Activated B cell treated with CpG ODN at 0.5 μM for 24 hours (primary cell): ENCODE measurements at regions of chr19 and their contacts with region 1.

Region 1: DNA sequence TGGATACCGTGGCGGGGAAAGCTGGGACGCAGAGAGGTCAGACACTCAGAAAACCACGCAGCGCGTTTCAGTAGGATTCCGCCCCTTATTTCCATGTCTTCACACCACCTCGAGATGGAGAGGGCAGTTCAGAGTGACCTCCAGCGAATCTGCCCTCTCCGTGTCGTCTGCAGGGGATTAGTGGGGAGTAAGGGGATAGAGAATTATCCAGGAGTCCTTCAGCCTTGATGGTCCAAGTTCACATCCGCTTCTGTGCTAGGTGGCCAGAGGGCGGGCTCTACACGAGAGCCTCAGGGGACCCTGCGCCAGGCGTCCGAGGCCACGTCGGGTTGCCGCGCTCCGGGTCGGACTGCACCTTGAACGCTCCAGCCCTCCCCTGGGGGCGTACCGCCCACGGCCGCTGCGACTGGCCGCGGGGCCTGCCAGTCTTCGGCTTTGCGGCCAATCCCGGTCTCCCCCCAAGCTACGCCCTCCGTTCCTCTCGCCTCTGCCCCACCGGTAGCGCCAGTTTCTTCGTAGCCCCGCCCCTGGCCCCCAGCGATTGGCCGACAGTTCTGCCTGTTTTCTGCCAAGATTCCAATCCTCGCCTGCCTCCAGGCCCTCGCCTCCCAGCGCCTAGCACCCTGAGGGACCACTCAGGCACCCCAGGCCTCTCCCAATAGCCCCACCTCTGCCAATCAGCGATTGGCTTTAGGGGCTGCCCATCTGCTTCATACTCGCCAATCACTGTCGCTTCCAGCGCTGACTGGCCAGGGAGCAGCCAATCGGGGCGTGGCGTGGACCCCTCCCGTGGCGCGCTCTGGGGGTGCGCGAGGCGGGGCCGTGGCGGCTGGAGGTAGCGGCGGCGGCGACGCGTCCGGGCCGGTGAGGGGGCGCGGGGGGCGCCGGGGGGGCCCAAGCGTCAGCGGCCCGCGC is at the start of gene SLC25A42:
- DNase-seq: peak; percentile 96
- ATAC-seq: peak; percentile 89
- H3K4me3 Mint-ChIP-seq: peak within 1 kb of the TSS; percentile 88
- H3K27ac Mint-ChIP-seq: peak within 1 kb of the TSS; percentile 89
- H3K4me1 Mint-ChIP-seq: peaks cover 52% of the 10 kb centered on the region
- H3K27me3 Mint-ChIP-seq: no peaks in the 10 kb centered on the region
- CTCF ChIP-seq: no peak
- total RNA-seq, gene SLC25A42: 14.2 and 17.5 TPM in 2 replicates

Region 2: DNA sequence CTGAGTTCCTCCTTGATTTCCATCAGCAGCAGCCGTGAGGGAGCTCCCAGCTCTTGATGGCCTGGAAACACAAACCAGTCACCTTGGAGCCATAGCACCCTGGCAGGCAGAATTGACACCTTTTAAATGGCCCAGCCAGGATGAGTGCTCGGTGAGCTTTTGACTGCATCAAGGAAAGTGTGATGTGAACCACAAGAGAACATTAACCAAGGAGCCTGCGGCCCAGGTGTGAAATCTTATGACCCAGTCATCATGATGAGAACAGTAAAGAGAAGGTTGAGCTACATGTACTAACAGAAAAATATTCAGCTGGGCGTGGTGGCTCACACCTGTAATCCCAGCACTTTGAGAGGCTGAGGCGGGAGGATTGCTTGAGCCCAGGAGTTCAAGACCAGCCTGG is 52.9 kb before region 1 on chr19:
- CTCF ChIA-PET with region 1: no interaction called
- POLR2A ChIA-PET with region 1: no interaction called
- intact Hi-C with region 1: no loop called
- DNase-seq: no peak
- ATAC-seq: no peak
- H3K4me3 Mint-ChIP-seq: no peak overlapping the region
- H3K27ac Mint-ChIP-seq: no peak overlapping the region
- H3K4me1 Mint-ChIP-seq: no peaks in the 10 kb centered on the region
- H3K27me3 Mint-ChIP-seq: no peaks in the 10 kb centered on the region
- CTCF ChIP-seq: no peak

Region 3: DNA sequence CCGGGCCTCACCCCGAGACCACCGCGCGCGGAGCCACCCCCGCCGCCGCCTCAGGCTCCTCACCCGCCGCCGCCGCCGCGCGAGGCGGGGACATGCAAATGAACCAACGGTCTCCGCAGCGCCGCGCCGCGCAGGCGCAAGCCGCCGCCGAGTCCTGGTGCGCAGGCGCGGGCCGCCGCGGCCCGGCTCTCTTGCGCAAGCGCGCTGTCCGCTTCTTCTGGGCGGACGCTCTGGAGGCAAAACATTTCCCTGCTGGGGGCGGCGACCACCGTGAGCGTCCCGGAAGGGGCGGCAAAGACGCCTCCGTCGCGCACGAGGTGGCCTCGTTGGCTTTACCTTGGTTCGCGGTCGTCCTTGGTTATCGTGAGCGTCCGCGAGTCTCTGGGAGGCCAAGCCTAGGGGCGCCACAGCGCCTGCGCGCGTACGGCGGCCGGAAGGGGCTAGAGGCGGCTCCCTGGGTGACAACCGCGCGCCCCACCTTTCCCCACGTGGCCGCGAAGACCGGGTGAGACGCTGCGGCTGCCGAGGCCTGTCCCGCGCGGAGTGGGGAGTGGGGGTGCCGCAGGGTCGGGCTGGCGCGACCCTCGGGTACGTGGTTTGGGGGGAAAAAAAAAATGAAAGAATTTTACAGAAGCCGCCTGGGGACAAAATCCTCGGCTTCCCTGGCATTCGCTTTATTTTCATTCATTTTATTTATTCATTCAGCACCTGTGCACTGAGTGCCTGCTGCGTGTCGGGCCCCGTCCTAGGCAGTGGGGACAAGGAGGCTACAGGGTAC is 29.8 kb before region 1 on chr19 and contains the starts of genes ARMC6 and SUGP2:
- CTCF ChIA-PET with region 1: no interaction called
- POLR2A ChIA-PET with region 1: interaction called, 4 read pairs
- intact Hi-C with region 1: loop called (anchors 1 kb)
- DNase-seq: peak; percentile 94
- ATAC-seq: peak; percentile 76
- H3K4me3 Mint-ChIP-seq: peak within 1 kb of the TSS; percentile 92
- H3K27ac Mint-ChIP-seq: peak within 1 kb of the TSS; percentile 91
- H3K4me1 Mint-ChIP-seq: peaks cover 31% of the 10 kb centered on the region
- H3K27me3 Mint-ChIP-seq: no peaks in the 10 kb centered on the region
- CTCF ChIP-seq: no peak
- total RNA-seq, gene ARMC6: 33.3 and 37.9 TPM in 2 replicates
- total RNA-seq, gene SUGP2: 121 and 122 TPM in 2 replicates

Region 4: GRCh38 chr19:19115954-19116353 is 52.5 kb after region 1 on chr19:
- CTCF ChIA-PET with region 1: interaction called, 10 read pairs
- POLR2A ChIA-PET with region 1: interaction called, 4 read pairs
- intact Hi-C with region 1: no loop called
- DNase-seq: peak; percentile 38
- ATAC-seq: peak; percentile 56
- H3K4me3 Mint-ChIP-seq: no peak overlapping the region
- H3K27ac Mint-ChIP-seq: no peak overlapping the region
- H3K4me1 Mint-ChIP-seq: peaks cover 13% of the 10 kb centered on the region
- H3K27me3 Mint-ChIP-seq: no peaks in the 10 kb centered on the region
- CTCF ChIP-seq: no peak

Region 5: GRCh38 chr19:19138169-19138981 is 74.9 kb after region 1 on chr19 and contains the start of gene TMEM161A:
- CTCF ChIA-PET with region 1: no interaction called
- POLR2A ChIA-PET with region 1: interaction called, 3 read pairs
- intact Hi-C with region 1: loop called (anchors 1 kb)
- DNase-seq: peak; percentile 90
- ATAC-seq: peak; percentile 99
- H3K4me3 Mint-ChIP-seq: peak within 1 kb of the TSS; percentile 98
- H3K27ac Mint-ChIP-seq: peak within 1 kb of the TSS; percentile 90
- H3K4me1 Mint-ChIP-seq: peaks cover 30% of the 10 kb centered on the region
- H3K27me3 Mint-ChIP-seq: no peaks in the 10 kb centered on the region
- CTCF ChIP-seq: no peak
- total RNA-seq, gene TMEM161A: 20.8 and 22.6 TPM in 2 replicates

Region 6: GRCh38 chr19:19192078-19192882 is 128.8 kb after region 1 on chr19 and contains the starts of genes BORCS8 and RFXANK:
- CTCF ChIA-PET with region 1: no interaction called
- POLR2A ChIA-PET with region 1: interaction called, 6 read pairs
- intact Hi-C with region 1: loop called (anchors 1 kb)
- DNase-seq: peak; percentile 91
- ATAC-seq: peak; percentile 85
- H3K4me3 Mint-ChIP-seq: peak within 1 kb of the TSS; percentile 99
- H3K27ac Mint-ChIP-seq: peak within 1 kb of the TSS; percentile 99
- H3K4me1 Mint-ChIP-seq: peaks cover 49% of the 10 kb centered on the region
- H3K27me3 Mint-ChIP-seq: no peaks in the 10 kb centered on the region
- CTCF ChIP-seq: no peak
- total RNA-seq, gene BORCS8: 51.8 and 52.3 TPM in 2 replicates
- total RNA-seq, gene RFXANK: 95.4 and 96.9 TPM in 2 replicates